BJ (cell line): ENCODE measurements at regions of chr2 and their contacts with region 1.

Region 1: GRCh38 chr2:203936535-203936934 is at the start of gene ICOS:
- DNase-seq: no peak
- H3K4me3 ChIP-seq: no peak within 1 kb of the TSS
- H3K27me3 ChIP-seq: no peaks in the 10 kb centered on the region; the same call in 1 of the 2 replicates
- CTCF ChIP-seq: no peak
- polyA plus RNA-seq, gene ICOS: not detected in 2 replicates

Region 2: GRCh38 chr2:204207866-204208265 is 271.3 kb after region 1 on chr2:
- CTCF ChIA-PET with region 1: no interaction called
- POLR2A ChIA-PET with region 1: interaction called, 10 read pairs
- DNase-seq: no peak
- H3K4me3 ChIP-seq: no peak overlapping the region
- H3K27me3 ChIP-seq: no peaks in the 10 kb centered on the region
- CTCF ChIP-seq: no peak